Adrenal gland (tissue), 19 donors: ENCODE measurements at regions of chr10 and their contacts with region 1.

Region 1: DNA sequence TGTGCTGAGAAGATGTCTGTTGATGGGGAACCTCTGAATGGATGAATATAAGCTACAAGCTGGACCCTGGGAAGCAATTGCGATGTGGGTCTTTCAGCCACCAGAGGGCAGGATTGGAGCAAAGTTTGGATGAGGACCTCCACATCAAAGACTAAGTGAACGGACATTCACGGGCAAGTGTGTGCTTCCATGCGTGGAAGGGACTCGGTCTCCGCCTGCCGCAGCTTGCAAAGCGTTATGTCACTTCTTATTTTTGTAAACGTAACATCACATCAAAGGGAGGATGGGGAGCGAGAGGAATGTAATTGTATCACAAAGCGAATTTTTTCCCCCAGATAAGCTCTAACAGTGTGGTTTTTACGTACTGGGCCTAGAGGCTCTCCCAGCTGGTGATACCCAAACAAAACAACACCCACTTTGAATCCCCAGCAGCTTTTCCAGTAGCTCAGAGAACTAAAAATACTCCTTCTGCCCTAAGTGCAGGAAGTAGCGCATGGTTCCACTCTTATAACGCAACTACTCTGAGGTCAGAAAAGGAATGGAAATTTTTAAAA is 65.0 kb downstream of the VWA2 start:
- DNase-seq: peak; percentile 71 to 95 (median 84)
- H3K4me3 ChIP-seq: peak overlapping the region in 1 of 4 donors; percentile 45
- H3K27ac ChIP-seq: peak overlapping the region in 2 of 5 donors; percentile 34 to 55
- H3K4me1 ChIP-seq: peaks cover 10% of the 10 kb centered on the region in 2 donors
- H3K27me3 ChIP-seq: no peaks in the 10 kb centered on the region
- CTCF ChIP-seq: peak; percentile 70 to 83 (median 78)
- POLR2A ChIP-seq: no peak

Region 2: DNA sequence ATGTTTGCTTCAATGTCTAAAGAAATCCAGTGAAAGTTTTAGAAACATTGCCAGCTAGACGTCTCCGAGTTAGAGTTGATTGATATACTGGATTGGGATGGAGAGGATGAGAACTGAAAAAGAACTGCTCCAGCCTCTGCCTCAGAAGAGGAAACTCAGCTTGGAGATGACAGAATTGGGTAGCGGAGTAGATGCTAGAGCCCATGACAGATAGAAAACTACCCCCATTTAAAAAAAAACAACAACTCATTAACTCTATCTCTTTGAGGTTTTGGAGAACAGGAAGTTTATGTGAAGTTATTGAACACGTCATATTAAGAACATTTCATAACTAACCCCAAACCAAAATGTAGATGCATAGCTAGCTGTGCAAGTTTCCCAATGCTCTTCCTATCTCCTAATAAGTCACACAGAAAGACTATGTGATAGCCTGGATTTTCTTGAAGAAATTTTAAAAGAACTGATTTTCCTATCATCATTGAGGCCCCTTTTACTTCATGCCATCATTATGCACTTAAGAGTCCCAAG is 128.5 kb after region 1 on chr10:
- intact Hi-C with region 1: loop called (anchors 5 to 10 kb)
- DNase-seq: no peak
- H3K4me3 ChIP-seq: no peak overlapping the region
- H3K27ac ChIP-seq: no peak overlapping the region
- H3K4me1 ChIP-seq: no peaks in the 10 kb centered on the region
- H3K27me3 ChIP-seq: no peaks in the 10 kb centered on the region
- CTCF ChIP-seq: no peak
- POLR2A ChIP-seq: no peak

Region 3: GRCh38 chr10:114437456-114438292 is 133.6 kb after region 1 on chr10:
- intact Hi-C with region 1: loop called (anchors 5 to 10 kb)
- DNase-seq: no peak
- H3K4me3 ChIP-seq: no peak overlapping the region
- H3K27ac ChIP-seq: no peak overlapping the region
- H3K4me1 ChIP-seq: no peaks in the 10 kb centered on the region
- H3K27me3 ChIP-seq: no peaks in the 10 kb centered on the region
- CTCF ChIP-seq: peak in 4 of 6 experiments; percentile 19 to 45 (median 32)
- POLR2A ChIP-seq: no peak

Region 4: DNA sequence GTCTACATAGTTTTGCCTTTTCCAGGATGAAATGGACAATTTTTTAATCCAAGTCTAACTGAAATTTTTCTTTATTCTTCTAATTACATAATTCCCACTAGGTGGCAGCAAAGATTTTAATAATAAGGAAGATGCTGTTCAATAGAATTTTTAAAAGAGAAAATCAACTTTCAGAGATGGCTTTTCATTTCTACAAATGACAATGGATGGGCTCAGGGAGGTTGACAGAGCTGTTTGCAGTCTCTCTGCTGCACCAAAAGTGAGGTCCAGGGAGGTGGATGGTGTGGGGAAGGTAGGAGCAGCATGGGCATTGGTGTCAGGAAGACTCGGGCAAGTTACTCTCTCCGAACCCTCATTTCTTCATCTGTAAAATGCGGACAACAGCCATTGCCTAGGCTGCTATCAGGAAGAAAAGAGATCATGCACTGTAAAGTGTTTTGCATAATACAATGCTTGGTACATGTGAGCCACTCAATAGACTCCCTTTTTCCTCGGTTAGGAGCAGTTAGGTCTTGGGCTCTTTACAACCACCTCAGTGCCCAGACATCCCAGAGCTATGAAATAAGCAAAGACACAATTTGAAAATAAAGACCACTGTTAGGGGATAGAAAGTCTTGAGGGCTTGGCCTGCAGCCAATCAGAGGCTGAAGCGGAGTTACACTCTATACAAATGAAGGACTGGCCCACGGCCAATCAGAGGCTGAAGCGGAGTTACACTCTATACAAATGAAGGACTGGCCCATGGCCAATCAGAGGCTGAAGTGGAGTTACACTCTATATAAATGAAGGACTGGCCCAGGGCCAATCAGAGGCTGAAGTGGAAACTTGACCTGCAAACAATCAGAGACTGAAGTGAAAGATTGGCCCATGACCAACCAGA is 246.9 kb after region 1 on chr10:
- intact Hi-C with region 1: loop called in 1 of 2 experiments (anchors 10 kb)
- DNase-seq: peak; percentile 30 to 78 (median 60)
- H3K4me3 ChIP-seq: no peak overlapping the region
- H3K27ac ChIP-seq: peak overlapping the region in 4 of 5 donors; percentile 64 to 89 (median 70)
- H3K4me1 ChIP-seq: peaks cover 12 to 28% of the 10 kb centered on the region in 2 donors
- H3K27me3 ChIP-seq: no peaks in the 10 kb centered on the region
- CTCF ChIP-seq: peak; percentile 33 to 71 (median 54)
- POLR2A ChIP-seq: no peak

Region 5: DNA sequence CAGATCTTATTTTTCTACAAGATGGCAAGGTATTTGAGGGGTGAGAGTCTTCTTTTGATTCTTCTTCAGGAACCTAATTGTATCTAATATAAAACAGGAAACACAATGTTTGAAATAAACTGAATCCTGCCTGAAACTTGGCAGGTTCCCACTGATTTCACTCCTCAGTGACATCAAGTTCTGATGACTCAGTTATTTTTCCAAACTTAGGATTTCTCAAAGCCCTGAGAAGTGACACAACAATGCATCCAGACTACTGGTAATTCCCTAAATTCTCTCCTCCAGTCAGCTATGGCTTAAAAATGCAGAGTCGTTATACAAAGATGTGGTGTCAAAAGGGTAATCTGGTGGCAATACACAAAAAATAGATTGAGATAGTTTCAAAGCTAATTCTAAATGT is 273.0 kb after region 1 on chr10:
- intact Hi-C with region 1: no loop called
- DNase-seq: peak; percentile 50 to 82 (median 66)
- H3K4me3 ChIP-seq: no peak overlapping the region
- H3K27ac ChIP-seq: peak overlapping the region; percentile 51 to 92 (median 82)
- H3K4me1 ChIP-seq: peaks cover 52 to 64% of the 10 kb centered on the region in 2 donors
- H3K27me3 ChIP-seq: no peaks in the 10 kb centered on the region
- CTCF ChIP-seq: no peak
- POLR2A ChIP-seq: peak in 1 of 2 donors; percentile 56

Region 6: DNA sequence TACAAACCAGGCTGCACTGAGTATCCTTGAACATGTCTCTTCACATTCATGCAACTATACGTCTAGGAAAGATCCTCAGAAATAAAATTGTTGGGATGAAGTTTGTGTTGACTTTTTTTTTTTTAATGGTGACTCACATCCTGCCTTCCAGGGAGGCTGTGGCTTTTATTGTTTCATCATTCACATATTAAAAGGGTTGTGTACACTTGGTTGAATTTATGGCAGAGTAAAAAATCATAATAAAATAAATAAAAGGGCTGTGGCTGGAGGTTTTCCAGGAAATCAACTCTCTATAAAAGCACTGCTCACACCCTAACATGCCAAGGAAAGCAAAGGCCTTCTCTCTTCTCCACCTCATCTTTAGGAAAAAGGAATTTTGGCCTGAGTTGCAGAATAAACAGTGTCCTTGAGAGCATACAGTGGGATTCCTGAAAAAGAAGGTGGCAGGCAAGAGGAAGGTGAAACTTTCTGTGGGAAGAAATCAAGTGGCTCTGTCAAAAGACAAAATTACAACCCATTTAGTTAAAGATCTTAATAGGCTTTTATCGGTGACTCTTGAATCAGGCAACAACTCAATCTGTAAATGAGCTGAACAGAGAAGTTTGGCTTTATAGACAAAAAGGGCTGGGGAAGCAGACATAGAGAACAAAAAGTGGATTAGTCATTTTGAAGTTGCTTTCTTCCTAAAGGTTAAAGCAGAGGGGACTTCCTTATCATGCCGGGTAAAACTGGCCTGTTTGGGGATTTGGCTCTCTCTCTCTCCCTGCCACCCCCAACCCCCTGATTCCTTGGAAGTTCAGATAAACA is 475.9 kb after region 1 on chr10:
- intact Hi-C with region 1: loop called in 1 of 2 experiments (anchors 10 kb)
- DNase-seq: no peak
- H3K4me3 ChIP-seq: no peak overlapping the region
- H3K27ac ChIP-seq: peak overlapping the region in 3 of 5 donors; percentile 19 to 44 (median 36)
- H3K4me1 ChIP-seq: peaks cover 8 to 16% of the 10 kb centered on the region in 2 donors
- H3K27me3 ChIP-seq: no peaks in the 10 kb centered on the region
- CTCF ChIP-seq: no peak
- POLR2A ChIP-seq: no peak

Region 7: DNA sequence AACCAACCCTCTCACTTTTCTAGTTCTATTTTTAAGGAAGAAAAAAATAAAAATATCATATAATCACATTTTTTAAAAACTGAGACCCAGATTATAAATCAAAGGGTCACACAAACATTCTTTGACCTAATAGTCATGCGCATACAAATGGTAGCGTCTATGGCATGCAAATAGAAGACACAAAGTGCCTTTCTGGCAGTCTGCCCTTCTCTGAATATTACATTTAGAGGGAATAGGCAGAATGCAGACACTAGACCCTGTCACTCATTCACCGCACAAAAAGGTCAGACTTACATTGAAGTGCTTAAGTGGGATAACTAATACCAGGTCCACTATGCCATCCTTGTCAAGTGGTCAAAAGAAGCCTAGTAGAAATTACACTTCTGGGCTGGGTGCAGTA is 490.9 kb after region 1 on chr10:
- intact Hi-C with region 1: loop called in 1 of 2 experiments (anchors 10 kb)
- DNase-seq: no peak
- H3K4me3 ChIP-seq: no peak overlapping the region
- H3K27ac ChIP-seq: no peak overlapping the region
- H3K4me1 ChIP-seq: no peaks in the 10 kb centered on the region
- H3K27me3 ChIP-seq: no peaks in the 10 kb centered on the region
- CTCF ChIP-seq: no peak
- POLR2A ChIP-seq: no peak

Region 8: DNA sequence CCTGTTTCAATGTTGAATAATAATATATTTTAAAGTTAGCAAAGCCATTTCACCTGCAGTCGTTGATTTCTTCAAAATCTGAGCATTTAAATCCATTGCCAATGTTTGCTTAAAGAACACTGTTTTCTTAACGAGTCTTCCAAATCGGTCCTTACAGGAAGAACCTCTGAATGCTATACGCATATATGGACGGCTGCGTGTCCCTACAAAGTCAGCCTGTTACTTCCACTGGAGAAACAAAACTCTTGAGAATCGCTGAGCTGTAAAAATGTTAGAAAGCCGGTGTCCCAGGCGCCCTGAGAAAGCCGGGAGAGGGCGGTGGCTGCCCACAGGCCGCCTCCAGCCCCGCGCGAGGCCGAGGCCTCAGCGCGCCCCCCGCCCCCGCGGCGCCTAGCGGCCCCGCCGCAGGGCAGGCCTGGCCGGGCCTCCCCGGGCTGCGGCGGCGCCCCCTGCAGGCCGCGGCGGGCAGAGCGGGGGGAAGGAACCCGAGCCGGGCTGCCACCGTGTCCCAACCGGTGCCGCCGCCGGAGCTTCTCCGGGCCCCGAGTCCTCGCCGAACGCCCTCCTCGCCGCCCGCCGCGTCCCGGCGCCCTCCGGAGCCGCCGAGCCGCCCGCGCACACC is 517.3 kb after region 1 on chr10 and contains the start of gene FHIP2A:
- intact Hi-C with region 1: no loop called
- DNase-seq: peak; percentile 71 to 88 (median 75)
- H3K4me3 ChIP-seq: peak within 1 kb of the TSS; percentile 84 to 96 (median 86)
- H3K27ac ChIP-seq: peak within 1 kb of the TSS; percentile 86 to 97 (median 96)
- H3K4me1 ChIP-seq: peaks cover 32 to 39% of the 10 kb centered on the region in 2 donors
- H3K27me3 ChIP-seq: no peaks in the 10 kb centered on the region
- CTCF ChIP-seq: peak in 3 of 6 experiments; percentile 64 to 91 (median 77)
- POLR2A ChIP-seq: peak; percentile 45 to 71
- total RNA-seq, gene FHIP2A: 18.0 to 39.6 (median 30.5) TPM